ENCODE measurements at regions of chr3 and their contacts with region 1.

Region 1: GRCh38 chr3:25648107-25648535 is 16.6 kb downstream of the TOP2B start:
- DNase-seq: peak; percentile 70 to 81 (median 75)
- H3K4me3 ChIP-seq: no peak overlapping the region
- H3K4me3 Mint-ChIP-seq: peak overlapping the region in 2 of 7 donors; percentile 1 to 18
- H3K27ac ChIP-seq: no peak overlapping the region
- H3K27ac Mint-ChIP-seq: peak overlapping the region in 7 of 8 donors; percentile 0 to 69 (median 20)
- H3K4me1 ChIP-seq: peaks cover 14% of the 10 kb centered on the region
- H3K4me1 Mint-ChIP-seq: peaks cover 42 to 65% (median 58%) of the 10 kb centered on the region in 3 donors
- H3K27me3 ChIP-seq: no peaks in the 10 kb centered on the region
- H3K27me3 Mint-ChIP-seq: no peaks in the 10 kb centered on the region

Region 2: DNA sequence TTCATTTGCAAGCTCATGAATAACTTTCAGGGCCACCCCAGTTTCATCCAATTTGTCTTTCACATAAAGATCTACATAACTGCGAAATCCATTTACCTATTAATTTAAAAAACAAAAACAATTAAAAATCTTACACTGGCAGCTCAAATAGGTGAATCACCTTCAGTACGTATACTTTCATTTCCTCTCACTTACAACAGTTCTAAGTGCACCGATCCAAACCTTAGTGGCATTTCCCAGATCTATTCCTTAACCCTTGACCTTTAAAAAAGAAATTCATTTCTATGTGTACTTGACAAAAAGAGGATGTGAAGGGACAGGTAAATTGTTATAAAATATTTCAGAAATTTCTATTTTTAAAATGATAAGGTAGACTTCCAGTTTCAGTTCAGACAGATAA is 14.2 kb before region 1 on chr3:
- CTCF ChIA-PET with region 1: interaction called, 15 read pairs
- POLR2A ChIA-PET with region 1: no interaction called
- DNase-seq: no peak
- H3K4me3 ChIP-seq: no peak overlapping the region
- H3K4me3 Mint-ChIP-seq: no peak overlapping the region
- H3K27ac ChIP-seq: no peak overlapping the region
- H3K27ac Mint-ChIP-seq: peak overlapping the region in 3 of 8 donors; percentile 35 to 77 (median 56)
- H3K4me1 ChIP-seq: no peaks in the 10 kb centered on the region
- H3K4me1 Mint-ChIP-seq: peaks cover 18 to 22% (median 20%) of the 10 kb centered on the region in 3 donors
- H3K27me3 ChIP-seq: no peaks in the 10 kb centered on the region
- H3K27me3 Mint-ChIP-seq: no peaks in the 10 kb centered on the region

Region 3: GRCh38 chr3:25856902-25857518 is 208.9 kb after region 1 on chr3:
- CTCF ChIA-PET with region 1: interaction called, 88 read pairs
- POLR2A ChIA-PET with region 1: no interaction called
- DNase-seq: peak in 2 of 5 donors; percentile 21 to 29
- H3K4me3 ChIP-seq: no peak overlapping the region
- H3K4me3 Mint-ChIP-seq: no peak overlapping the region
- H3K27ac ChIP-seq: no peak overlapping the region
- H3K27ac Mint-ChIP-seq: no peak overlapping the region
- H3K4me1 ChIP-seq: no peaks in the 10 kb centered on the region
- H3K4me1 Mint-ChIP-seq: peaks cover 0 to 3% (median 0%) of the 10 kb centered on the region in 3 donors
- H3K27me3 ChIP-seq: no peaks in the 10 kb centered on the region
- H3K27me3 Mint-ChIP-seq: peaks cover 0 to 2% of the 10 kb centered on the region in 2 donors

Measured in CD8-positive, alpha-beta memory T cell (primary cell).